ENCODE measurements at regions of chr1 and their contacts with region 1.

Region 1: DNA sequence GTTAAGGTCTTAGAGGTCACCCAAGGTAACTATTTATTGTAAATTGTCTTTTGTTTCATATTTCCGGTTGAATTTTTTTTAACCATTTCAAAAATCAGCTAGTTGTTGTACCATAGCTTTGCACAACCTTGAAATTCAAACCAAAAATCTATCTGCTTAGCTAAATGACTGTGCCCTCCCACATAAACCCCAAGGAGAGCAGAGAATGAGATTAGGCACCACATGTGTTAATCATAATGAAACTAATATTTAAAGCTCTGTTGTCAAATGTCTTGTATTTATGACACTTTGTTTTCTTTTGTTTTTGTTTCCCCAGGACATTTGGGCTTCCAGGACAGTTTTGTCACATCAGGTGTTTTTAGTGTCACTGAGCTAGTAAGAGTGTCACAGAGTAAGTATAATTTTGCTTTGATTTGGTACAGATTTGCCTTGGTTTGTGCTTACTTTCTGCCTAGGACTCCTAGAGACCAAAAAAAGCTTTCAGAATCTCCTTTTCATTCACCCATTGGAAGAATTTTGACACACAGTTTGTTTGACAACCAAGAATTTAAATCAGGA is 249.9 kb downstream of the NFIA start:
- DNase-seq: peak; percentile 26
- H3K4me3 Mint-ChIP-seq: no peak overlapping the region
- H3K27ac Mint-ChIP-seq: no peak overlapping the region
- H3K4me1 Mint-ChIP-seq: peaks cover 8% of the 10 kb centered on the region
- H3K27me3 Mint-ChIP-seq: no peaks in the 10 kb centered on the region

Region 2: DNA sequence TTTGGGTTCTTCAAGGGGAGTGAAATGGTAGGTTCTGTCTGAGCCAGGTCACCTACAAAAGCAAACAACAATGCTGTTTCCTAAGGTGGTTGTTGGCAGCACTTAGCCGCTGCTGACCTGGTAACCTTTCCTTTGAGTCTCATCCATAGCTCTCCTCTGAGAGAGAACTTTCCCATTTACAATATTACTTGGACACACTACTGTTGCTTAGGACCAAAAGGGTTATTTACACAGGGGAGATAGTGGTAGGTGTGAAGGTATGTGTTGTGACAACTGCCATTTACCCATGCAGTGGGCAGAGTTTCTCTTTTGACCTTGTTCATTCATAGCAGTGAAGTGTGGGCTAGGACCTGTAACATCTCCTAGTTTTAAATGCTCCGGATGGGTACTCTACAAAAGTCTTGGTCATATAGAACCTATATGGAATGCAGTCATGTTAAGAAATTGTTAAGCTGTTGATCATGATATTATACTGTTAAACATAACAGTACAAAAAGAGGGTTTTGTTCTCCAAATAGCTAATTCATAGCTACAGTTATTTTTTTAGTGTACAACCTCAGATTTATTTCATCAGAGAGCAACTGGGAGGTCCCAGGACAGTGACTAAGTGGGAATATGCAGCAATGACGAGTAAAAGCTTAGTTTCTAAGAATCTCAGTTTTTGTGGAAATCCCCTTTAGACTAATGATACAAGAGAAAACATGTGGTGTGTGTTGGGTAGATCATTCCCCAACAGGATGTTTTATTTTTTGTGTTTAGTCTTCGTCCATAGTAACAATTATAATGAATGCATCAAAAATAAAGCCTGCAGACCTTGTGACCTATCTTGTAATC is 30.2 kb before region 1 on chr1:
- CTCF ChIA-PET with region 1: interaction called, 5 read pairs
- intact Hi-C with region 1: loop called (anchors 1 kb)
- DNase-seq: peak; percentile 60
- H3K4me3 Mint-ChIP-seq: no peak overlapping the region
- H3K27ac Mint-ChIP-seq: peak overlapping the region; percentile 65
- H3K4me1 Mint-ChIP-seq: peaks cover 19% of the 10 kb centered on the region
- H3K27me3 Mint-ChIP-seq: peaks cover 24% of the 10 kb centered on the region

Region 3: GRCh38 chr1:61352845-61353435 is 20.7 kb after region 1 on chr1:
- CTCF ChIA-PET with region 1: no interaction called
- intact Hi-C with region 1: no loop called
- DNase-seq: no peak
- H3K4me3 Mint-ChIP-seq: no peak overlapping the region
- H3K27ac Mint-ChIP-seq: no peak overlapping the region
- H3K4me1 Mint-ChIP-seq: no peaks in the 10 kb centered on the region
- H3K27me3 Mint-ChIP-seq: no peaks in the 10 kb centered on the region